ENCODE measurements at regions of chr10 and their contacts with region 1.

Region 1: GRCh38 chr10:24209946-24210491 is 1.1 kb downstream of the KIAA1217 start:
- DNase-seq: peak; percentile 78
- H3K4me3 ChIP-seq: peak overlapping the region; percentile 77
- H3K27ac ChIP-seq: peak overlapping the region; percentile 36; the same call in 1 of the 2 replicates
- H3K4me1 ChIP-seq: no peaks in the 10 kb centered on the region
- H3K27me3 ChIP-seq: no peaks in the 10 kb centered on the region

Region 2: GRCh38 chr10:24503461-24504320 is 293.7 kb after region 1 on chr10:
- in situ Hi-C with region 1: loop called (anchors 25 kb)
- DNase-seq: peak; percentile 56
- H3K4me3 ChIP-seq: no peak overlapping the region
- H3K27ac ChIP-seq: no peak overlapping the region
- H3K4me1 ChIP-seq: no peaks in the 10 kb centered on the region
- H3K27me3 ChIP-seq: no peaks in the 10 kb centered on the region